CD8-positive, alpha-beta memory T cell (primary cell): ENCODE measurements at regions of chr10 and their contacts with region 1.

Region 1: GRCh38 chr10:97731346-97732051 is 5.4 kb upstream of the ZFYVE27 start:
- DNase-seq: peak; percentile 32 to 61 (median 50)
- H3K4me3 ChIP-seq: no peak overlapping the region
- H3K4me3 Mint-ChIP-seq: peak overlapping the region in 1 of 7 donors; percentile 16
- H3K27ac ChIP-seq: no peak overlapping the region
- H3K27ac Mint-ChIP-seq: no peak overlapping the region
- H3K4me1 ChIP-seq: peaks cover 2% of the 10 kb centered on the region
- H3K4me1 Mint-ChIP-seq: peaks cover 6 to 9% (median 9%) of the 10 kb centered on the region in 3 donors
- H3K27me3 ChIP-seq: no peaks in the 10 kb centered on the region
- H3K27me3 Mint-ChIP-seq: peaks cover 3 to 22% of the 10 kb centered on the region in 2 donors

Region 2: DNA sequence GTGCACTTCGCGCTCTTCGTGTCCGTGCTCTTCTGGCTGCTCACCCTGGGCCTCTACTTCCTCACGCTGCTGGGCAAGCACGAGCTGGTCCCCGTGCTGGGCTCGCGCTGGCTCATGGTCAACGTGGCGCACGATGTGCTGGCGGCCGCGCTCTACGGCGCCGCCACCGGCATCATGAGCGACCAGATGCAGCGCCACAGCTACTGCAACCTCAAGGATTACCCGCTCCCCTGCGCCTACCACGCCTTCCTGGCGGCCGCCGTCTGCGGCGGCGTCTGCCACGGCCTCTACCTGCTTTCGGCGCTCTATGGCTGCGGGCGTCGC is 17.5 kb before region 1 on chr10:
- CTCF ChIA-PET with region 1: interaction called, 199 read pairs
- POLR2A ChIA-PET with region 1: interaction called, 10 read pairs
- DNase-seq: peak; percentile 26 to 69 (median 50)
- H3K4me3 ChIP-seq: peak overlapping the region; percentile 59
- H3K4me3 Mint-ChIP-seq: peak overlapping the region; percentile 86 to 100 (median 99)
- H3K27ac ChIP-seq: peak overlapping the region; percentile 9
- H3K27ac Mint-ChIP-seq: peak overlapping the region; percentile 18 to 98 (median 95)
- H3K4me1 ChIP-seq: no peaks in the 10 kb centered on the region
- H3K4me1 Mint-ChIP-seq: peaks cover 9 to 23% (median 9%) of the 10 kb centered on the region in 3 donors
- H3K27me3 ChIP-seq: no peaks in the 10 kb centered on the region
- H3K27me3 Mint-ChIP-seq: peaks cover 18 to 23% of the 10 kb centered on the region in 2 donors